ENCODE measurements at regions of chr1 and their contacts with region 1.

Region 1: DNA sequence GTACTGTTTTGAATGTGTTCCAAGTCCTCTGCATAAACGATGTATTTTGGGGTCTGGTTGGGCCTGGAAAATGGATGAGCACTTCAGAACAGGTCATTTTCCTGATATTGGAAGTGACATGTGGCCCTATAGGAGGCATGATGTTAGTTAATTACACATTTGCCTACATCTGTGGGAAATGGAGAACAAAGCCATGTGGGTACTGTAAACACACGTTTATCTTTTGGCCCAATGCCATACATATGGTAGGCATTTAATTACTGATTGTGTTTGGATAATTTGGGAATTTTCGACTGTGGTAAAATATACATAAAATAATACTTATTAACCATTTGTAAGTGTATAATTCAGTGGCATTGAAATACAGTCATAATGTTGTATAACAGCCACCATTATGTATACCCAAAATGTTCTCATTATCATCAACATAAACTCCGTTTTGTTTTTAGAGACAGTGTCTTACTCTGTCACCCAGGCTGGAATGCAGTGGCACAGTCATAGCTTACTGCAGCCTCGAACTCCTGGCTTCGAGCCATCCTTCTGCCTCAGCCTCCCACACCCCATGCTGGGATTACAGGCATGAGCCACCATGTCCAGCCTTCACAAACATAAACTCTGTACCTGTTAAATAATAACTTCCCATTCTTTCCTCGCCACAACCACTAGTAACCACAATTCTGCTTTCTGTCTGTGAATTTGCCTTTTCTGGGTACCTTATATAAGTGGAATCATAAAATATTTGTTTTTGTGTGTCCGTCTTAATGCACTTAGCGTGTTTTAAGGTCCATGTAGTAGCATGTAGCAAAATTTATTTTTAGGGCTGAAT is 11.9 kb upstream of the RNPEP start:
- DNase-seq: no peak
- H3K4me3 ChIP-seq: no peak overlapping the region
- H3K27ac ChIP-seq: no peak overlapping the region
- H3K4me1 ChIP-seq: no peaks in the 10 kb centered on the region
- H3K27me3 ChIP-seq: no peaks in the 10 kb centered on the region
- CTCF ChIP-seq: no peak
- POLR2A ChIP-seq: no peak

Region 2: GRCh38 chr1:201877877-201878401 is 92.6 kb before region 1 on chr1:
- intact Hi-C with region 1: loop called (anchors 2 kb)
- DNase-seq: peak; percentile 83
- H3K4me3 ChIP-seq: no peak overlapping the region
- H3K27ac ChIP-seq: peak overlapping the region; percentile 3
- H3K4me1 ChIP-seq: no peaks in the 10 kb centered on the region
- H3K27me3 ChIP-seq: no peaks in the 10 kb centered on the region
- CTCF ChIP-seq: peak; percentile 37 to 81 (median 76)
- POLR2A ChIP-seq: no peak

Region 3: DNA sequence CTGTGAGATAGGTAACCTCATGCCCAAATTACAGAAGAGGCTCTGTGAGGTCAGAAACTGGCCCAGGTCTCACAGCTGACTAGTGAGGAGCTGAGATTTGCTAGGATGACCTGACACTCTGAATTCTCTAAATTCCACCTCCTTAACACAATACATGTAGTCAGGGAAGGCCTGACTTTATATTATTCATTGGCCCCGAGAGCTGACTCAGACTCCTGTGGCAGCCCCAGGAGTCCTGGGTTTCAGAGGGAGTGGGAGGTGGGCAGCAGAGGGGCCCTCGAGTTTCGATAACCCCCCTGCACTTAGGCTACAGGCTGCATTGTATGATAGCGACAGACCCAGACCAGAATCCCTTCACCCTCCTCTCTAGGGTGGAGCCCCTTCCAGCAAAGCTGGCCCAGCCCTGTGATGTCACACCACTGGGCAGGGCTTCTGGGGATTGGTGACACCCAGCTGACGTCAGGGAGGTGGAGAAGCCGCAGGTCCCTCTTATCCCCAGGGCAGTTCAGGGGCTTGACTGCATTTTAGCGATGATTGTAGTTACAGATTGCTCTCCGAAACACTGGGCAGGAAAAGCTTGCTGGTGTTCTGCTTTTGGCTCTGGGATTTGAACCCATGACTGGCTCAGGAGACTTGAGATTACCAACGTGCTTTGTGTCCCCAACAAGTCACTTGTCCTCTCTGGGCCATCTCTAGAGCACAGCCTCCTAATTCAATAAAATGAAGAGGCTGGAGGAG is 135.2 kb after region 1 on chr1:
- intact Hi-C with region 1: no loop called
- DNase-seq: no peak
- H3K4me3 ChIP-seq: no peak overlapping the region
- H3K27ac ChIP-seq: no peak overlapping the region
- H3K4me1 ChIP-seq: peaks cover 6% of the 10 kb centered on the region
- H3K27me3 ChIP-seq: no peaks in the 10 kb centered on the region
- CTCF ChIP-seq: no peak
- POLR2A ChIP-seq: no peak

Region 4: DNA sequence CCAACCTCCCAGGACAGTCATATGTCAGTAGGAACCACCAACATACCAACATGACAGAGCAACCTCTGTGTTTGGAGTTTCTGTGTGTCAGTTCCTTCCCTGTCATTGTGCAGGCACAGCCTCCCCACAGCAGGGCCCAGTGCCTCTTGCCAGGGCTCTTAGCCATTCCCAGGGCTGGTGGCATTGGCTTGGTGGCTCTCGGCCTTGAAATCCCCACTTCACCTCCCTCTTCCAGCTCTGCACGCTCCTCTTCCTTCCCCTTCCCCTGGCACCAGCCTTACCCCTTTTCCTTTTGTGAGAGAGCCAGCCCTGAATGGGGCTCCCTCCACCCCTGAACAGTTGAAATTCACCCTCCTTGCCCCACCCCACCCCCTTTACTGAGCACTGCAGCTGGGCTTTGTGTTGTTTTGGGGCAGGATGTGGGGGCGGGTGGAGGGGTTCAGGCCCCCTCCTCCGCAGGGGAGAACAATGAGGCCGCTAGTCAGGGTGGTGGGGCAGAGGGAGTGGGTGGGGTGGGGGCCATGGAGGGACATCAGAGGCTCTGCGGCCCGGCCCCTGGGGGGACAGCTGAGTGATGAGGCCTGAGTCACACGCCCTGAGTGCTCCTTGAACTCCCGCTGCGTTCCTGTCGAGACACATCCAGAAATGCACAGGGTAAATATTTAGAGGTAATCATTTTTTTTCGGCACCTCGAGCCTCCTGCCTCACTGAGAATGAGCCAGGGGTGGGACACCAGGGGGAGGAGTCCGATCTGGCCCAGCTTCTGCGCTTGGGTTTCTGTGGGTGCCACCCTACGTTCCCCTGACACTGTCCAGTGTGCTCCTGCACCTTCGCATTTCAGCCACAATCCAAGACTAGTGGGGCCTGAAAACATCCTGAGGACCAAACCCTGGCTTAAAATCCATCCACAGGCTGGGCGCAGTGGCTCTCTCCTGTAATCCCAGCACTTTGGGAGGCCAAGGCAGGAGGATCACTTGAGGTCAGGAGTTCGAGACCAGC is 251.7 kb after region 1 on chr1:
- intact Hi-C with region 1: no loop called
- DNase-seq: peak; percentile 67
- H3K4me3 ChIP-seq: no peak overlapping the region
- H3K27ac ChIP-seq: peak overlapping the region; percentile 12 to 57
- H3K4me1 ChIP-seq: no peaks in the 10 kb centered on the region
- H3K27me3 ChIP-seq: no peaks in the 10 kb centered on the region
- CTCF ChIP-seq: no peak
- POLR2A ChIP-seq: no peak